PC-3 (cell line): ENCODE measurements at regions of chr4 and their contacts with region 1.

Region 1: GRCh38 chr4:113292371-113293042 is 243.1 kb downstream of the ANK2 start:
- DNase-seq: no peak
- ATAC-seq: no peak
- H3K4me3 ChIP-seq: no peak overlapping the region
- H3K27ac ChIP-seq: no peak overlapping the region
- H3K4me1 ChIP-seq: no peaks in the 10 kb centered on the region
- H3K27me3 ChIP-seq: no peaks in the 10 kb centered on the region
- CTCF ChIP-seq: no peak

Region 2: DNA sequence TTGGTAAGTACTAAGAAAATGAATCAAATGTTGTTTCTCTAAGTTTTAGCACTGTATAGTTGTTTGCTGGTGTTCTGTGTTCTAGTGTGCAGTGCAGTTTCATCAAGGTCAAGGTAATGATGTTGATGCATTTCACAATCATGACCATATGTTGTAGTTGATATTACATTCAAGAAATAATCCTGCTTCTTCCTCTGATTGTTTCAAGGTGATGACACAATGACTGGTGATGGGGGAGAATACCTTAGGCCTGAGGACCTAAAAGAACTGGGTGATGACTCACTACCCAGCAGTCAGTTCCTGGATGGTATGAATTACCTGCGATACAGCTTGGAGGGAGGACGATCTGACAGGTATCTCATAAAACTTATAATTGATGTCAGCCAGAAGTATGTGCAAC is 18.5 kb after region 1 on chr4:
- CTCF ChIA-PET with region 1: no interaction called
- POLR2A ChIA-PET with region 1: no interaction called
- intact Hi-C with region 1: no loop called
- DNase-seq: peak; percentile 66
- ATAC-seq: peak; percentile 48
- H3K4me3 ChIP-seq: no peak overlapping the region
- H3K27ac ChIP-seq: no peak overlapping the region
- H3K4me1 ChIP-seq: no peaks in the 10 kb centered on the region
- H3K27me3 ChIP-seq: no peaks in the 10 kb centered on the region
- CTCF ChIP-seq: no peak

Region 3: GRCh38 chr4:113384600-113384999 is 92.1 kb after region 1 on chr4:
- CTCF ChIA-PET with region 1: no interaction called
- POLR2A ChIA-PET with region 1: no interaction called
- intact Hi-C with region 1: no loop called
- DNase-seq: peak; percentile 85
- ATAC-seq: peak; percentile 78
- H3K4me3 ChIP-seq: peak overlapping the region; percentile 19; the same call in 1 of the 2 replicates
- H3K27ac ChIP-seq: peak overlapping the region; percentile 85
- H3K4me1 ChIP-seq: peaks cover 28% of the 10 kb centered on the region
- H3K27me3 ChIP-seq: no peaks in the 10 kb centered on the region
- CTCF ChIP-seq: no peak

Region 4: GRCh38 chr4:113901994-113902787 is 609.7 kb after region 1 on chr4:
- CTCF ChIA-PET with region 1: no interaction called
- POLR2A ChIA-PET with region 1: no interaction called
- intact Hi-C with region 1: loop called (anchors 10 kb)
- DNase-seq: peak; percentile 23
- ATAC-seq: no peak
- H3K4me3 ChIP-seq: no peak overlapping the region
- H3K27ac ChIP-seq: no peak overlapping the region
- H3K4me1 ChIP-seq: no peaks in the 10 kb centered on the region
- H3K27me3 ChIP-seq: no peaks in the 10 kb centered on the region
- CTCF ChIP-seq: no peak

Region 5: GRCh38 chr4:114694770-114695169 is 1402.3 kb after region 1 on chr4:
- CTCF ChIA-PET with region 1: no interaction called
- POLR2A ChIA-PET with region 1: no interaction called
- intact Hi-C with region 1: loop called (anchors 10 kb)
- DNase-seq: peak; percentile 59
- ATAC-seq: no peak
- H3K4me3 ChIP-seq: no peak overlapping the region
- H3K27ac ChIP-seq: no peak overlapping the region
- H3K4me1 ChIP-seq: no peaks in the 10 kb centered on the region
- H3K27me3 ChIP-seq: no peaks in the 10 kb centered on the region
- CTCF ChIP-seq: peak; percentile 64